Heart right ventricle (tissue), 16 donors: ENCODE measurements at regions of chr13 and their contacts with region 1.

Region 1: GRCh38 chr13:20495082-20496023 is 30.3 kb downstream of the CRYL1 start:
- DNase-seq: peak in 1 of 2 donors; percentile 55
- ATAC-seq: peak; percentile 66 to 87 (median 76)
- H3K4me3 ChIP-seq: peak overlapping the region in 6 of 10 donors; percentile 17 to 32 (median 30)
- H3K27ac ChIP-seq: peak overlapping the region in 3 of 10 donors; percentile 16 to 48 (median 16)
- H3K4me1 ChIP-seq: peaks cover 0 to 11% (median 6%) of the 10 kb centered on the region in 9 donors
- H3K27me3 ChIP-seq: no peaks in the 10 kb centered on the region
- CTCF ChIP-seq: peak; percentile 89 to 98 (median 96)

Region 2: GRCh38 chr13:20182231-20182846 is 313.0 kb before region 1 on chr13:
- intact Hi-C with region 1: loop called in 1 of 10 experiments (anchors 5 kb)
- DNase-seq: no peak
- ATAC-seq: peak; percentile 72 to 87 (median 79)
- H3K4me3 ChIP-seq: no peak overlapping the region
- H3K27ac ChIP-seq: no peak overlapping the region
- H3K4me1 ChIP-seq: peaks cover 0 to 10% (median 3%) of the 10 kb centered on the region in 9 donors
- H3K27me3 ChIP-seq: peaks cover 0 to 62% (median 40%) of the 10 kb centered on the region in 7 donors
- CTCF ChIP-seq: peak; percentile 60 to 88 (median 81)

Region 3: DNA sequence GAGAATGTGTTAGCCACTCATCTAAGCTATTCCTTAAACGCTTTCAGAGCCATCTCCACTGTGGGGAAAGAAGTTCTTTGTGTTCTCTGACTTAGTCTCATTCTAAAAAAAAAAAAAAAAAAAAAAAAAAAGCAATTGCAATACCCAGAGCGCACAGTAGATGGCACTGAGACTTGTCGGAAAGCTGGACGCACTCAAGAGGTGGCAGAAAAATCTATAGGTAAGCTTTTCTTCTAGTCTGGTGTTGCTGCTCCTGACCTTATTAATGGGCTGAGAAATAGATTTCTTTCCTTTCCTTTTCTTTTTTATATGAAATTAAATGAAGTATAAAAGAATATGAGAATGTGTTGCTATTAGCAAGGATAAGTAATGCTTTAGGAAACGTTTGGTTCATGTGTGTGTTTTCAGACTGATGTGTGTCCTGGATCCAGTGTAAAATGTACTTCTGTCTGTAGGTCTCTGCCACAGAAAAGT is 298.0 kb before region 1 on chr13:
- intact Hi-C with region 1: loop called in 2 of 10 experiments (anchors 5 to 10 kb)
- DNase-seq: no peak
- ATAC-seq: peak in 4 of 8 donors; percentile 16 to 59 (median 42)
- H3K4me3 ChIP-seq: no peak overlapping the region
- H3K27ac ChIP-seq: no peak overlapping the region
- H3K4me1 ChIP-seq: peaks cover 3 to 20% (median 19%) of the 10 kb centered on the region in 9 donors
- H3K27me3 ChIP-seq: peaks cover 16 to 58% (median 48%) of the 10 kb centered on the region in 7 donors
- CTCF ChIP-seq: peak; percentile 52 to 77 (median 72)

Region 4: DNA sequence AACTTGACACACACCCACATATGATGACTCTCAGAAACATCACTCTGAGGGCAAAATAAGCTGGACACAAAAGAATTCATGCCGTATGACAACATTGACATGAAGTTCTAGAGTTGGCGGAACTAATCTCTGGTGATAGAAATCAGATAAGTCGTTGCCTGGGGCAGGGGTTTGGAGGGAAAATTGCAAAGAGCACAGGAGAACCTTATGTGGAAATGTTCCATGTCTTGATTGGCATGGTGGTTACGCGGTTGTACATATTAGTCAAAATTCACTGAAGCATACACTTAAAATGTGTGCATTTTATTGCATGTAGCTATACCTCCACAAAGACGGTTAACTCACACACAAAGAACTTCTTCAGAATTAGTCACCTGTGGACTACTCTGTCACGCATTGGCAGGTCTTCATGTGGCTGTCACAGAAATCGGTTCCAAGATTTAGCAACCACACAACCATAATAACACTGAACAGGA is 125.4 kb before region 1 on chr13:
- intact Hi-C with region 1: no loop called
- DNase-seq: no peak
- ATAC-seq: no peak
- H3K4me3 ChIP-seq: no peak overlapping the region
- H3K27ac ChIP-seq: no peak overlapping the region
- H3K4me1 ChIP-seq: no peaks in the 10 kb centered on the region
- H3K27me3 ChIP-seq: peaks cover 0 to 18% (median 3%) of the 10 kb centered on the region in 7 donors
- CTCF ChIP-seq: no peak

Region 5: GRCh38 chr13:20703780-20704445 is 208.6 kb after region 1 on chr13:
- intact Hi-C with region 1: loop called in 4 of 10 experiments (anchors 5 to 10 kb)
- DNase-seq: peak; percentile 54 to 76
- ATAC-seq: peak; percentile 73 to 90 (median 81)
- H3K4me3 ChIP-seq: peak overlapping the region in 9 of 10 donors; percentile 27 to 81 (median 52)
- H3K27ac ChIP-seq: peak overlapping the region in 1 of 10 donors; percentile 53
- H3K4me1 ChIP-seq: peaks cover 0 to 25% (median 12%) of the 10 kb centered on the region in 9 donors
- H3K27me3 ChIP-seq: peaks cover 0 to 38% (median 14%) of the 10 kb centered on the region in 7 donors
- CTCF ChIP-seq: peak; percentile 18 to 67 (median 50)

Region 6: DNA sequence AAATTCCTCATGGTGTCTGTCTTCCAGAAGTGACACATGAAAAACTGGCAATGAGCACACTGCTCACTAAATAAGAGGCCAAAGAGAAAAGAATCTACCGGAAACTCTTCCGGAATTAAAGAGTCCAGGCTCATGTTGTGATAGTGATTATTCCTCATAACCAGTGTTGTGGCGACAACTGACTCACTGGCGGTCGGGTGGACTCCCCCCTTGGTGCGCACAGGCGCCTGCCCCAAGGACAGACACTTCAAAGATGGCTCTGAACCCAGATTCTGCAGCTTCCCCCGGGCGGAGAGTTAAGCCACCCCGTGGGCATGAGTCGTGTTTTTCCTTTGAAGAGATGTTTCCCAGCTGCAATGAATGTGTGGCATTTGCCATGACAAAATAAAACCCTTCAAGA is 218.4 kb after region 1 on chr13:
- intact Hi-C with region 1: loop called in 6 of 10 experiments (anchors 5 to 10 kb)
- DNase-seq: no peak
- ATAC-seq: peak in 7 of 8 donors; percentile 24 to 57 (median 41)
- H3K4me3 ChIP-seq: peak overlapping the region in 1 of 10 donors; percentile 40
- H3K27ac ChIP-seq: peak overlapping the region; percentile 42 to 88 (median 75)
- H3K4me1 ChIP-seq: peaks cover 3 to 40% (median 24%) of the 10 kb centered on the region in 9 donors
- H3K27me3 ChIP-seq: no peaks in the 10 kb centered on the region
- CTCF ChIP-seq: no peak

Region 7: DNA sequence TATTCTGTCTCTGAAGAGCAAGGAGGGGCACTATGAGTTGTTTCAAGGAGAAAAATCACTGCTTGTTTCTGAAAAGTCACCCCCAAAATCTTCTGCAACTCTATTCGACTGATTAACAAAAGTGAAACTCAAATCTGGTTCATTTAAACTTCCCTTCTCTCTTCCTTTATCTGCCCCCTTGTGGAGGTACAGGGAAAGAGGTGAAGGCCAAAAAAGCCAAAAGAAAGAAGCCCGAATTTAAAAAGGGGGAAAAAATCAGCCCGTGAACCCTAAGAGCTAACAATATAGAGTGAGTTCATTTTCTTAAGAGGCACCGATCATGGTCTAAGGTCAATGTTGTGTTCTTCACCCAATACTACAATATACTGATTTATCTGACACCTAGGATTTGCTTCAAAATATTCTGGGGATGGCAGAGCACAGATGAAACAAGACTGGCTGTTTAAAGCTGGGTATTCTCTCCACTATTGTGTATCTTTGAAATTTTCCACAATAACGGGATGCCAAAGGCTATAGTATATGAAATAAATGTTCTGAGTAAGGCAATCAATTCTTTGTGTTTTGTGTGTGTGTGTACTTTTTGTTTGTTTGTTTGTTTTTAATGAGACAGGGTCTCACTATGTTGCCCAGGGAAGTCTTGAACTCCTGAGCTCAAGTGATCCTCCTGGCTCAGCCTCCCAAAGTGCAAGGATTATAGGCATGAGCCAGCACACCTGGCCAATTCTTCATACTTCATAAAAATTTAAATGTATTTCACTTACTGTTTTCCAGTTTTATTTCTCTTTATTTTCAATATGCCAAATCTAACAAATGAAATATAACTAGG is 333.4 kb after region 1 on chr13:
- intact Hi-C with region 1: loop called in 6 of 10 experiments (anchors 5 to 10 kb)
- DNase-seq: peak in 1 of 2 donors; percentile 52
- ATAC-seq: peak in 6 of 8 donors; percentile 24 to 68 (median 51)
- H3K4me3 ChIP-seq: peak overlapping the region in 7 of 10 donors; percentile 14 to 43 (median 33)
- H3K27ac ChIP-seq: peak overlapping the region in 9 of 10 donors; percentile 1 to 82 (median 66)
- H3K4me1 ChIP-seq: peaks cover 0 to 22% (median 10%) of the 10 kb centered on the region in 9 donors
- H3K27me3 ChIP-seq: no peaks in the 10 kb centered on the region
- CTCF ChIP-seq: peak; percentile 55 to 87 (median 79)

Region 8: GRCh38 chr13:20924758-20925394 is 429.5 kb after region 1 on chr13:
- intact Hi-C with region 1: loop called (anchors 2 to 10 kb)
- DNase-seq: peak; percentile 46 to 80
- ATAC-seq: peak in 3 of 8 donors; percentile 48 to 61 (median 58)
- H3K4me3 ChIP-seq: no peak overlapping the region
- H3K27ac ChIP-seq: no peak overlapping the region
- H3K4me1 ChIP-seq: no peaks in the 10 kb centered on the region
- H3K27me3 ChIP-seq: no peaks in the 10 kb centered on the region
- CTCF ChIP-seq: peak; percentile 40 to 90 (median 83)